Brain microvascular endothelial cell (primary cell): ENCODE measurements at regions of chr4 and their contacts with region 1.

Region 1: GRCh38 chr4:147866532-147867271 is 134.8 kb downstream of the ARHGAP10 start:
- DNase-seq: peak; percentile 89
- H3K4me3 ChIP-seq: no peak overlapping the region
- H3K27ac ChIP-seq: peak overlapping the region; percentile 84
- H3K27me3 ChIP-seq: no peaks in the 10 kb centered on the region
- CTCF ChIP-seq: peak; percentile 99

Region 2: DNA sequence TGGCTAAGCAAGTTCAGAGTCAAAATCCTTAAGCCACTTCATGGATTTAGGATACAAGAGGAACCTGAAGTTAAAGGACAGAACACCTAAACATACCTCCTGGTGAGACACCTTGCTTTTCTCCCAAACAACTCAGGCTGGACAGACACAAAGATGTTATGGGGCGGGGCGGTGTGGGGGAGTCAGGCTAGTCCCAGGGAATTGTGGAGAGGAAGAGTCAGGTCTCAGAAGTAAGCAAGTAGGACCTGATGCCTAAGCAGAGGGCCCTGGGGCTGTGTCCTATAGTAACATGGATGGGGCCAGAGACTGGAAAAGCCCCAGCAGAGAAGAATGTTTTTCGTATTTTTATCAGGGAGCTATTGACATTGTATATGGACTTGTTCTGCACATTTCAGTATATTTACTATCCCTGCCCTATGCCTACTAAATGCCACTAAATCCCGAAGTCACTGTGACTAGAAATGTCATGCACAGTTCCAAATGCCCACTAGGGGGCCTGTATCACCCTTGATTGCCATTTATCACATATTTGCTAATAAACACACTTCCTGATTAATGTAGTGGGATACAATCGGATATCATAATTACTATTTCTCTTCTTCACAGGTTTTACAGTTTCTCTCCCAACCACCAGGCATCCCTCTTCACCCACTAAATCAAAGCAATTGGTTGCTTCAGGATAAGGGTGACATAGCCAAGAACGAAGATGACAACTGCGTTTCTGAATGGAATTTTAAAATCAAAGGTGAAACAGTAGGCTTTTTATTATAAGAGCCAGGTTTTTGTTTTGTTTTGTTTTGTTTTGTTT is 158.6 kb before region 1 on chr4:
- in situ Hi-C with region 1: loop called (anchors 25 kb)
- DNase-seq: peak; percentile 49
- H3K4me3 ChIP-seq: no peak overlapping the region
- H3K27ac ChIP-seq: no peak overlapping the region
- H3K27me3 ChIP-seq: no peaks in the 10 kb centered on the region
- CTCF ChIP-seq: peak; percentile 84

Region 3: GRCh38 chr4:148030193-148030873 is 163.6 kb after region 1 on chr4:
- in situ Hi-C with region 1: no loop called
- DNase-seq: no peak
- H3K4me3 ChIP-seq: no peak overlapping the region
- H3K27ac ChIP-seq: no peak overlapping the region
- H3K27me3 ChIP-seq: no peaks in the 10 kb centered on the region
- CTCF ChIP-seq: no peak

Region 4: DNA sequence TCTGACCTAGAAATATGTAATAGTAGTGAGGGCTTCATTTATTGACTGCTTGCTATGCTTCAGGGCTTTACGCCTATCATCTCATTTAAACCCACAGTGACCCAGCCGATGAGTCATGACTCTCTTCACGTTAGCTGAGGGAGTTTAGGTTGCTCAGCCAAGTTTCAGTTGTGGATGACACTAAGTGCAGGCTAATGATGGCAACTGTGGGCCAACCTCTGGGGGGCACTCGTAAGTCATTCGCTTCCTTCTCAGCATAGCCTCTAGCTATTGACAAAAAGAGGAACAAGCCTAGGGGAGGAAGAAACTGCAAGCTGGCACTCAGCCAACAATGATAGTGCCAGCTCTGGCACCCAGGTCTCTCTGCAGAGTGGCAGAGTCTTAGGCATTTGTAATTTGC is 190.2 kb after region 1 on chr4:
- in situ Hi-C with region 1: no loop called
- DNase-seq: peak; percentile 63
- H3K4me3 ChIP-seq: no peak overlapping the region
- H3K27ac ChIP-seq: no peak overlapping the region
- H3K27me3 ChIP-seq: no peaks in the 10 kb centered on the region
- CTCF ChIP-seq: no peak